ENCODE measurements at regions of chr17 and their contacts with region 1.

Region 1: GRCh38 chr17:39164675-39165143 is 1.3 kb downstream of the ARL5C start:
- DNase-seq: peak; percentile 51
- H3K4me3 ChIP-seq: peak overlapping the region; percentile 32
- H3K27me3 ChIP-seq: peaks cover 23% of the 10 kb centered on the region
- CTCF ChIP-seq: peak; percentile 94

Region 2: DNA sequence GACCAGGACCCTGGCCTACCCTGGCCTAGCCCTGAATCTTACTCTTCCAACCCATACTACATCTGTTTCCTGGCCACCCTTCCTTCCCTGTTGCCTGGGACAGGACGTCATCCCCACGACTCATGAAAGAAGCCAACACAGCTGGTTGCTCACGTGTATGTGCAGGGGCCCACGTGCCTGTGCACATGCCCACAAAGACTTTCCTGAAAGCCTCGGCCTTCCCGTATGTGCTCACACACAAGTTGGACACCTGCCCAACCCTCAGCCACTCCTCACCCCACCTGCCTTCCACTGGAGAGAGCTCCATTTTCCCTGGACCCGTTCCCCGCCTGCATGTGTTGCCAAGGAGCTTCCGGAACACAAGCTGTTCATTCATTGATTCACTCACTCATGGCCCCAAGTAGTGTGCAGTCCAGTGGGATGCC is 20.3 kb before region 1 on chr17:
- CTCF ChIA-PET with region 1: interaction called, 11 read pairs
- POLR2A ChIA-PET with region 1: no interaction called
- DNase-seq: peak; percentile 64
- H3K4me3 ChIP-seq: no peak overlapping the region
- H3K27me3 ChIP-seq: 0 out of 2 replicates have a peak, but pooled peaks cover 1% of the 10 kb centered on the region
- CTCF ChIP-seq: no peak

Region 3: GRCh38 chr17:39194089-39194984 is 29.6 kb after region 1 on chr17:
- CTCF ChIA-PET with region 1: interaction called, 16 read pairs
- POLR2A ChIA-PET with region 1: no interaction called
- DNase-seq: no peak
- H3K4me3 ChIP-seq: no peak overlapping the region
- H3K27me3 ChIP-seq: no peaks in the 10 kb centered on the region
- CTCF ChIP-seq: peak; percentile 65

Region 4: GRCh38 chr17:39209317-39210092 is 44.8 kb after region 1 on chr17:
- CTCF ChIA-PET with region 1: interaction called, 10 read pairs
- POLR2A ChIA-PET with region 1: no interaction called
- DNase-seq: no peak
- H3K4me3 ChIP-seq: peak overlapping the region; percentile 36
- H3K27me3 ChIP-seq: no peaks in the 10 kb centered on the region
- CTCF ChIP-seq: no peak

Region 5: GRCh38 chr17:39244600-39245570 is 80.2 kb after region 1 on chr17:
- CTCF ChIA-PET with region 1: interaction called, 33 read pairs
- POLR2A ChIA-PET with region 1: no interaction called
- DNase-seq: no peak
- H3K4me3 ChIP-seq: no peak overlapping the region
- H3K27me3 ChIP-seq: no peaks in the 10 kb centered on the region
- CTCF ChIP-seq: peak; percentile 97

Region 6: GRCh38 chr17:39769974-39770587 is 605.4 kb after region 1 on chr17:
- CTCF ChIA-PET with region 1: no interaction called
- POLR2A ChIA-PET with region 1: no interaction called
- DNase-seq: peak; percentile 72
- H3K4me3 ChIP-seq: no peak overlapping the region
- H3K27me3 ChIP-seq: peaks cover 35% of the 10 kb centered on the region
- CTCF ChIP-seq: no peak

Measured in BJ (cell line).